ENCODE measurements at regions of chr22 and their contacts with region 1.

Region 1: DNA sequence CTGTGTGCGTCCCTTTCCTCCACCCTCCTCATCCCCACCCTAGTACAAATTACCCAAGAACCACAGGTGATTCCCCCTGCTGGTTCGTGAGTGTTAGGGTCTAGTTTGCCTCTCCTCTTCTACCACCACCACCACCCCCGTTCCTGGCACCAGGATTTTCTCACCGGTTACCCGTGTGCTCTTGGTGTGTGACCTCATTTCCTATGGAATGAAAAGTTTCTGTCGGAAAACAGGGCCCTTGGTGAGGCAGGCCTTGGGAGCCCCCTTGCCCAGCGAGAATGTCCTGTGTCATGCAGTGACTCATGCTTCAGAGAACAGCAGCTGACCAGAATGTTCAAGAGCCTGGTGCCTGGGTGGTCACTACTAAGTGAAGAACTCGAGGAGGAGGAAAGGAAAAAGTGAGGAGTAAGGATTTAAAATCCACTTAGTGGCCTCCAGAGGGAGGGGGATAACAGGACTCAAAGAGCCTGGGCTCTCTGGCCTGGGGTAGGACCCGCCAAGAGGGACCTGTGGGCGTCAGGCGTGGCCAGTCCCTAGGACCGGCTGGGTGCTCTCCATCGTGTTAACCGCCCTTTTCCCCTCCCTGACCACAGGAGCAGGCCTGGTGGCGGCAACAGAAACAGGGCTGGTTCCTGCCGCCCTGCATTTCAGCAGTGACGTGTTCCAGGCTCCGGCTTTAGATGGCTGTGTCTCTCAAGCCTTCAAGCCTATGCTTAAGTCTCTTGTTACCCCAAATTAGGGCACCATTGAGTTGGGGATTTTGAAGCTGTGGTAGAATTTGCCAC is 30.2 kb downstream of the C22orf31 start:
- DNase-seq: peak in 2 of 3 donors; percentile 70 to 78
- ATAC-seq: peak; percentile 86 to 94
- H3K4me3 ChIP-seq: no peak overlapping the region
- H3K27ac ChIP-seq: peak overlapping the region; percentile 46
- H3K4me1 ChIP-seq: peaks cover 4% of the 10 kb centered on the region
- H3K27me3 ChIP-seq: no peaks in the 10 kb centered on the region

Region 2: DNA sequence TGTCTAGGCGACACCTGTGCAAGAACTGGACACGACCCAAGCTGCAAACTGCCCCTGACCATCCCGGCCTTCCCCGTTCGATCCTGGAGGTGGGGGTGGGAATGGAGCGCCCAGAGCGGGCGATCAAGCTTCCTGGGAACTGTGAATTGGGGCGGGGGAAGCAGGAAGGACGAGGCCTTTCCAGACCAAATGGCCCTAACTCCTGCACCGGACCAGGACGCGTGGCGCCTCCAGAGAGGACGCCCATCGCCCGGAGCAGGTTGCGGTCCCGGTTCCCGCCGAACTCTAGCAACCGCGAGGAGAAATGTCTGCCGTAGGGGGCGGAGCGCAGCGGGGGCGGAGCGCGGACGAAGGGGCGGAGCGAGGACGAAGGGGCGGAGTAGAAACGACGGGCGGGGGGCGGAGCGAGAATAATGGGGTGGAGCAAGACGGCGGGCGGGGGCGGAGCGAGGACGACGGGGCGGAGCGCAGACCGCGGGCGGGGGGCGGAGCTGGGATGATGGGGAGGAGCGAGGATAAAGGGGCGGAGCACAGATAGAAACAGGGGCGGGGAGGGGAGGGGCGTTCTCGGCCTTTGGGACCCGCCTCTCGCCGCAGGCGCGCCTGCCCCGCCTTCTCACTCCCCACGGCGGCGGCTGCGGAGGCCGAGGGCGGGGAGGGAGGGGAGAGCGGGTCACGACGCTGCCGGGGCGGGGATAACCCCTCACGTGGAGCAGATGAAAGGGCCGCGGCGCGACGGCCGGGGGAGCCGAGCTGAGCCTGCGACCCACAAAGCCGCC is 148.4 kb before region 1 on chr22 and contains the start of gene ZNRF3:
- intact Hi-C with region 1: loop called in 1 of 4 experiments (anchors 5 kb)
- DNase-seq: peak; percentile 94 to 97 (median 96)
- ATAC-seq: peak; percentile 97 to 98
- H3K4me3 ChIP-seq: peak within 1 kb of the TSS; percentile 92
- H3K27ac ChIP-seq: peak within 1 kb of the TSS; percentile 78
- H3K4me1 ChIP-seq: peaks cover 3% of the 10 kb centered on the region
- H3K27me3 ChIP-seq: no peaks in the 10 kb centered on the region
- total RNA-seq, gene ZNRF3: 8.4 to 9.4 (median 8.8) TPM